PC-9 (cell line): ENCODE measurements at regions of chr5 and their contacts with region 1.

Region 1: DNA sequence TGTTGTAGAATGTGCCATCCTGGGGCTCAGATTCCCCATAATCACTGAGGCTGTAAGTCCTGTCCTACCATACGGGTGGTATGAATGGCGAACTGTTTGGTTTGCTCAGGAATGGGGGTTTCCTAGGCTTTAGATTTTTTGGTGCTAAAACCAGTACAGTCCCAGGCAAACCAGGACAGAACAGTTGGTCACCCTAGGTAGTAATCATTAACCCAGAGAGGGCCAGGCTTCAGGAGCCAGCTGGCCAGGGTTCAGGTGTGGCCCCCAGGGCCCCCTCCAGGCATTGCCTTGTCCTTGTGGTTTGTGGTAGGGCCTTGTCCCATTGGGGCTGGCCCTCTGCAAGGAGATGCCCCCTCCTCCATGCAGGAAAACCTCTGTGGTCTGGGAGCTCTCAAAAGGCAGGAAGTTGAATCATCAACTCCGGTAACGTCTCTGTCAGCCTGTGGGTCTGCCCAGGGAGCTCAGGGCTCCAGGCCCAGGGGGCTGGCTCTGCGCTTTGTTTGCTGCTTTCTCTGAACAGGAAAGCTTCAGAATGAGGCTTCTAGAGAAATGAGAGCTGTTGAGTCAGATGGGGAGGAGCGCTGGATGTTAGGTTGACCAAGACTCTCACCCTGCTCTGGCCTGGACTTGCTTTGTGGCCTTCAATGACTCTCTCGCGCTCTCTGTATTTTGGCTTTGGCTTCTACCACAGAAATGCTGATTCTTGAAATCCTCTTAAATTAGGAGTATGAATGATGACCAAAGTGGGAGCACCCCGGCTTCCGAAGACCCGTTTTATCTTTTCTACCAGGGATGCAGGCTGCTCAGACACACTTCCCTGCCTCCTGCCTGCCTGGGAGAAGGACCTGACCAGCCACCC is 22.2 kb upstream of the JADE2 start:
- DNase-seq: peak; percentile 85 to 91
- H3K4me3 ChIP-seq: no peak overlapping the region
- H3K27ac ChIP-seq: peak overlapping the region; percentile 86
- H3K4me1 ChIP-seq: peaks cover 69% of the 10 kb centered on the region
- H3K27me3 ChIP-seq: no peaks in the 10 kb centered on the region
- CTCF ChIP-seq: no peak

Region 2: GRCh38 chr5:134465816-134466240 is 37.5 kb before region 1 on chr5:
- CTCF ChIA-PET with region 1: interaction called, 5 read pairs
- POLR2A ChIA-PET with region 1: interaction called, 14 read pairs
- intact Hi-C with region 1: loop called (anchors 1 kb)
- DNase-seq: peak; percentile 77 to 90
- H3K4me3 ChIP-seq: peak overlapping the region; percentile 58
- H3K27ac ChIP-seq: peak overlapping the region; percentile 85
- H3K4me1 ChIP-seq: peaks cover 25% of the 10 kb centered on the region
- H3K27me3 ChIP-seq: no peaks in the 10 kb centered on the region
- CTCF ChIP-seq: no peak